Adrenal gland (tissue), 19 donors: ENCODE measurements at regions of chr1 and their contacts with region 1.

Region 1: GRCh38 chr1:206912445-206913095 is 9.2 kb downstream of the FCMR start:
- DNase-seq: peak; percentile 69 to 94 (median 79)
- H3K4me3 ChIP-seq: no peak overlapping the region
- H3K27ac ChIP-seq: no peak overlapping the region
- H3K4me1 ChIP-seq: peaks cover 9 to 15% of the 10 kb centered on the region in 2 donors
- H3K27me3 ChIP-seq: peaks cover 10% of the 10 kb centered on the region
- CTCF ChIP-seq: peak; percentile 77 to 92 (median 88)
- POLR2A ChIP-seq: no peak

Region 2: DNA sequence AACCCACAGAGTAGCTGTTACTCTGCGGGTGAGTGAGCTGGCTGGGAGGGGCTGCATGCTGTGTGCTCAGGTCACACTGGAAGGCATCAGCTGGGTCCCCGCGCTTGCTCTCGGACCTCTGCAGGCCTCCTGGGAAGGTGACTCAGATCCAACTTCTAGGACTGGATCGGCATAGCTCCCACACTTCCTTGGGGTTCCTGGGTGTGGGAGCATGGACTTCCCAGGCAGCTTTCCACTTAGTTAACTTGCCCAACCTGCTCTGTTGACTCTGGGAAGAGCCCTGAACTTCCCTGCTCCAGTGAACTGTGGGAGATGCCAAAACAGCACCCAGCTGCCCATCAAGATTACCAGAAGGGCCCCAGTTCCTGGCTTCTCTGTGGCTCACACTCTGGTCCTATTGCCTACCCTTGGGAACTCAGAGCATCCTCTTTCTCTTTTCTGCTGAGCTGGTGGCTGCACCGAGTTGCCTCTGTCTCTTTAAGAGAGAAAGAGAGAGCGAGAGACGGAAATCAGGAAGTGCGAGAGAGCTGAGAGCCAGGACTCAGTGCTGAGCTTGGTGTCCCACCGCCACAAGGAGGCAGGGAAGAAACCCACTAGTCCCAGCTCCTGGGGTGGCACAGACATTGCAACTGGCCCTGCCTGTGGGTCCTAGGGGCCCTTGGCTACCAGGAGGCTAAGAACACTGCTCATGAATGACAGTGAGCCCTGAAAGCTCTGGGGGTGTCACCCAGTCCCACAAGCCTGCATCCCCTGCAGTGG is 442.5 kb before region 1 on chr1 and contains the start of gene IKBKE:
- intact Hi-C with region 1: loop called in 1 of 2 experiments (anchors 10 kb)
- DNase-seq: peak in 6 of 7 donors; percentile 42 to 79 (median 66)
- H3K4me3 ChIP-seq: peak within 1 kb of the TSS; percentile 35 to 65 (median 58)
- H3K27ac ChIP-seq: peak within 1 kb of the TSS in 1 of 5 donors; percentile 38
- H3K4me1 ChIP-seq: peaks cover 4 to 34% of the 10 kb centered on the region in 2 donors
- H3K27me3 ChIP-seq: no peaks in the 10 kb centered on the region
- CTCF ChIP-seq: peak in 4 of 6 experiments; percentile 22 to 49 (median 40)
- POLR2A ChIP-seq: peak in 1 of 2 donors; percentile 29
- total RNA-seq, gene IKBKE: 3.6 to 11.1 (median 7.4) TPM

Region 3: DNA sequence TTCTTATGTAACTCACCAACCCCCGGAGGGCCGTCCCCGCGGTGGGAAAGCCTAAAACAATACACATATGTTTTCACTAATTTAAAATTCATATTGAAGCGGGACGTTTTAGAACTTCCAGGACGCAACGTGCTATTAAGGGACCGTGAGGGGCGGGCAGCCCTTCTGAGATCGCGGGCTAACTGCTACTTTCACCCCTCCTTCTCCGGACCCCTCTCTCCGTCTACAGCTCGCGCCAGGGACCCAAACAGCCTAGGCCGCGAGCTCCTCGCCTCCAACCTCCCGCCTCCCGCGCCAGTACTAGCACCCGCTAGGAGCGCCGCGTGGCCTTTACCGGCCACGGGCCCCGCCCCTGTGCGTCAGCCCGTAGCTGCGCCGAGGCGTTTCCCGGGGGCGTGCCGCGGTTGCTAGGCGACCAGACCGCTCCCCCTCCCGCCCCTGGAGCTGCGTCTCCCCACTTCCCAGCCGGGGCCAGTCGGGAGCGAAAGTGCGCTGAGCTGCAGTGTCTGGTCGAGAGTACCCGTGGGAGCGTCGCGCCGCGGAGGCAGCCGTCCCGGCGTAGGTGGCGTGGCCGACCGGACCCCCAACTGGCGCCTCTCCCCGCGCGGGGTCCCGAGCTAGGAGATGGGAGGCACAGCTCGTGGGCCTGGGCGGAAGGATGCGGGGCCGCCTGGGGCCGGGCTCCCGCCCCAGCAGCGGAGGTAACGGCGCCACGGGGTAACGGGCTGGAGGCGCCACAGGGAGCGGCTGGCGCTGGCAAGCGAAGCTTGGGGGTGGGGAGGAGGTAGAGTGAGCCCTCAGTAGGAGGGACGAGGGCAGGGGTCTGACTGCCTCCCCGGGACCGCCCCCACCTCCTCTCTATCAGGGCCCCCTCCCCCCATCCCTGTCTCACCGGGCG is 277.2 kb before region 1 on chr1 and contains the start of gene DYRK3:
- intact Hi-C with region 1: loop called (anchors 10 kb)
- DNase-seq: peak; percentile 95 to 97 (median 97)
- H3K4me3 ChIP-seq: peak within 1 kb of the TSS; percentile 37 to 97 (median 80)
- H3K27ac ChIP-seq: peak within 1 kb of the TSS in 4 of 5 donors; percentile 27 to 85 (median 62)
- H3K4me1 ChIP-seq: peaks cover 8 to 28% of the 10 kb centered on the region in 2 donors
- H3K27me3 ChIP-seq: no peaks in the 10 kb centered on the region
- CTCF ChIP-seq: no peak
- POLR2A ChIP-seq: peak; percentile 72 to 93
- total RNA-seq, gene DYRK3: 2.9 to 6.3 (median 5.2) TPM

Region 4: GRCh38 chr1:206734499-206735142 is 177.9 kb before region 1 on chr1:
- intact Hi-C with region 1: loop called (anchors 5 to 10 kb)
- DNase-seq: peak in 4 of 7 donors; percentile 46 to 84 (median 69)
- H3K4me3 ChIP-seq: no peak overlapping the region
- H3K27ac ChIP-seq: peak overlapping the region in 1 of 5 donors; percentile 1
- H3K4me1 ChIP-seq: peaks cover 7 to 14% of the 10 kb centered on the region in 2 donors
- H3K27me3 ChIP-seq: no peaks in the 10 kb centered on the region
- CTCF ChIP-seq: peak; percentile 60 to 72 (median 66)
- POLR2A ChIP-seq: no peak

Region 5: GRCh38 chr1:206878456-206878855 is 34.1 kb before region 1 on chr1:
- intact Hi-C with region 1: no loop called
- DNase-seq: no peak
- H3K4me3 ChIP-seq: no peak overlapping the region
- H3K27ac ChIP-seq: no peak overlapping the region
- H3K4me1 ChIP-seq: no peaks in the 10 kb centered on the region
- H3K27me3 ChIP-seq: no peaks in the 10 kb centered on the region
- CTCF ChIP-seq: no peak
- POLR2A ChIP-seq: no peak